ENCODE measurements at regions of chr1 and their contacts with region 1.

Region 1: GRCh38 chr1:23634842-23635651 is 56.6 kb upstream of the RPL11 start:
- DNase-seq: peak; percentile 12
- H3K4me3 ChIP-seq: peak overlapping the region; percentile 60
- CTCF ChIP-seq: peak; percentile 83

Region 2: GRCh38 chr1:23539698-23540266 is 95.3 kb before region 1 on chr1:
- CTCF ChIA-PET with region 1: interaction called, 1,485 read pairs
- POLR2A ChIA-PET with region 1: interaction called, 3 read pairs
- DNase-seq: no peak
- H3K4me3 ChIP-seq: peak overlapping the region; percentile 33
- CTCF ChIP-seq: peak; percentile 93

Region 3: GRCh38 chr1:23585447-23586015 is 49.5 kb before region 1 on chr1:
- CTCF ChIA-PET with region 1: interaction called, 15 read pairs
- POLR2A ChIA-PET with region 1: interaction called, 3 read pairs
- DNase-seq: peak; percentile 97
- H3K4me3 ChIP-seq: peak overlapping the region; percentile 18
- CTCF ChIP-seq: no peak

Region 4: GRCh38 chr1:23613191-23614031 is 21.6 kb before region 1 on chr1:
- CTCF ChIA-PET with region 1: interaction called, 52 read pairs
- POLR2A ChIA-PET with region 1: no interaction called
- DNase-seq: no peak
- H3K4me3 ChIP-seq: no peak overlapping the region
- CTCF ChIP-seq: no peak

Region 5: GRCh38 chr1:23657659-23658275 is 22.7 kb after region 1 on chr1:
- CTCF ChIA-PET with region 1: interaction called, 51 read pairs
- POLR2A ChIA-PET with region 1: no interaction called
- DNase-seq: no peak
- H3K4me3 ChIP-seq: no peak overlapping the region
- CTCF ChIP-seq: peak; percentile 90

Measured in AG04449 (cell line).